Calu3 (cell line): ENCODE measurements at regions of chr5 and their contacts with region 1.

Region 1: GRCh38 chr5:1105350-1106265 is 6.3 kb downstream of the SLC12A7 start:
- DNase-seq: peak; percentile 56
- H3K4me3 Mint-ChIP-seq: peak overlapping the region; percentile 69
- H3K27ac Mint-ChIP-seq: peak overlapping the region; percentile 58
- H3K4me1 Mint-ChIP-seq: peaks cover 39% of the 10 kb centered on the region
- H3K27me3 Mint-ChIP-seq: no peaks in the 10 kb centered on the region
- CTCF ChIP-seq: no peak

Region 2: DNA sequence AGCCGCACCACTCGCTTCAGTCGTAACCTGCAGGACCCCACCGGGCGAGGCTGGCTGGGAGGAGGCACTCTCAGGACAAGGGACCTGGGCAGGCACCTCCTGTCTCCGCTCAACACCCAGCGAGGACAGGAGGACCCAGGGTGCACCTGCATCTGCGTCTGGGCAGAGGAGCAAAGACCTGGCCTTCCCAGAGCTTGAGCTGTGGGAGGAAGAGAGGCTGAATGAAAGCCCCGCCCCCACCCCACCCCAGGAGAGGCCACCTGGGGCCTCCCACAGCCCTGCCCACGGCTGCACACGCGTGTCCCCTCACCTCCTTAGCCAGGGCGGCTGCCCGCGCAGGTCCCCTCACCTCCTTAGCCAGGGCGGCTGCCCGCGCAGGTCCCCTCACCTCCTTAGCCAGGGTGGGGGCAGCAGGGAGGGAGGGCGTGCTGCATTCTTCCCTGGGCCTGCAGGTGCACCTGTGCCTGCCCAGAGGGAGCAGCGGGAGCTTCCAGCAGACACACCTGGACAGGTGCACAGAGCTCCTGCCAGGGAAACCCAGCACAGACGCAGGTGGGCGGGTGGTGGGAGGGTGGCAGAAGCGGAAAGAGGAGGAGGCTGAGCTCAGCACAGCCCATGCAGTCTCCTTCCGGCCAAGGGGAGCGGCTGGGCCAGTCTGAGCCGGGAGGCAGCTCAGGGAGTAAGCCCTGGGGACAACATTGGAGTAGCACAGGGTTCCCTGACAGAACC is 24.8 kb after region 1 on chr5:
- CTCF ChIA-PET with region 1: interaction called, 10 read pairs
- intact Hi-C with region 1: no loop called
- DNase-seq: peak; percentile 85
- H3K4me3 Mint-ChIP-seq: peak overlapping the region; percentile 74
- H3K27ac Mint-ChIP-seq: peak overlapping the region; percentile 91
- H3K4me1 Mint-ChIP-seq: peaks cover 30% of the 10 kb centered on the region
- H3K27me3 Mint-ChIP-seq: no peaks in the 10 kb centered on the region
- CTCF ChIP-seq: no peak

Region 3: GRCh38 chr5:2038321-2039179 is 932.9 kb after region 1 on chr5:
- CTCF ChIA-PET with region 1: no interaction called
- intact Hi-C with region 1: no loop called
- DNase-seq: no peak
- H3K4me3 Mint-ChIP-seq: no peak overlapping the region
- H3K27ac Mint-ChIP-seq: no peak overlapping the region
- H3K4me1 Mint-ChIP-seq: no peaks in the 10 kb centered on the region
- H3K27me3 Mint-ChIP-seq: peaks cover 34% of the 10 kb centered on the region
- CTCF ChIP-seq: no peak